ENCODE measurements at regions of chr15 and their contacts with region 1.

Region 1: DNA sequence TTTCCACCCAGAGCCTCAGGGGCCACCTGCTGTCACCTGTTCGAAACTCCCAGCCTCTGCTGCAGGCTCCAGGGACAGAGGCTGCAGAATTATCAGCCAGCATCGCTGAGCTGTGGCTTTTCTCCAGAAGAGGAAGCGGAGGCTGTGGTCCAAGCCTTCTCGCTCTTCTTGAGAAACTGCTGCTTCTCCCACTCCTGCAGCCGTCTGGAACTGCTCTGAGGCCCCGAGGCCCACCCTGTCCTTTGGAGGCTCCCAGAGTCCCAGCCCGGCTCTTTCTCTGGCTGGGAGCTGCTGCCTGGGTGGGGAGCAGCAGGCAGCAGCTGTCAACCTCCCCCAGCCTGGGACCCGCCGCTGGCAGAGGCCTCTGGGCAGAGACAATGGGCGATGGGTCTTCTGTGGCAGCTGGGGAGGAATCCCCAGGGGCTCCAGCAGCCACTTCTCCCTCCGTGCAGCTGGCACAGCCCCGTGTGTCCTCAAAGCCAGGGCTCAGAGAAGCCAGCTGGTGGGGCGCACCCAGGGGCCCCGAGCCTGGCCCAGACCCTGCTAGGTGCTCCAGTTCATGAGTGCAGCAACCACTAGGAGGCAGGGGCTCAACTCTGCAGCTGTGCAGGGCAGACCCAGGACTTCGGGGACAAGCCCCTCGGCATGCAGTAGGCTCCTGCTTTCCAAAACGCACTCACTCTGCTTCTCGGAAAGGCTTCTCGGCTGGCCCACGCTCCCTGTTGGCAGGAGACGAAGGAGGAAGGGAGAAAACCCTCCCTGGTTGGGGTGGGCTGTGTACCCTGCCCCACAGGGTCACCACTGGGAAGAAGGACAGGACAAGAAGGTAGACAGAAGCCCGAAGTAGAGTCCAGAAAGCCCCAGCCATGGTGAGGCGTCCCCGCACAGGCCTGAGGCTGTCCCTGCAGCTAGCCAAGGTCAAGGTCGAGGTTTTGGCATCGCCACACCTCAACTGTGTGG is 49.9 kb upstream of the FURIN start:
- DNase-seq: peak; percentile 45
- ATAC-seq: peak; percentile 50
- H3K4me3 Mint-ChIP-seq: peak overlapping the region; percentile 56
- H3K27ac Mint-ChIP-seq: peak overlapping the region; percentile 87
- H3K4me1 Mint-ChIP-seq: peaks cover 77% of the 10 kb centered on the region
- H3K27me3 Mint-ChIP-seq: no peaks in the 10 kb centered on the region

Region 2: GRCh38 chr15:90829942-90830440 is 11.5 kb after region 1 on chr15:
- CTCF ChIA-PET with region 1: interaction called, 26 read pairs
- POLR2A ChIA-PET with region 1: interaction called, 23 read pairs
- DNase-seq: peak; percentile 67
- ATAC-seq: peak; percentile 86
- H3K4me3 Mint-ChIP-seq: peak overlapping the region; percentile 62
- H3K27ac Mint-ChIP-seq: peak overlapping the region; percentile 95
- H3K4me1 Mint-ChIP-seq: peaks cover 72% of the 10 kb centered on the region
- H3K27me3 Mint-ChIP-seq: no peaks in the 10 kb centered on the region

Region 3: GRCh38 chr15:90839187-90840071 is 20.9 kb after region 1 on chr15:
- CTCF ChIA-PET with region 1: interaction called, 14 read pairs
- POLR2A ChIA-PET with region 1: interaction called, 7 read pairs
- DNase-seq: no peak
- ATAC-seq: no peak
- H3K4me3 Mint-ChIP-seq: peak overlapping the region; percentile 56
- H3K27ac Mint-ChIP-seq: peak overlapping the region; percentile 74
- H3K4me1 Mint-ChIP-seq: peaks cover 61% of the 10 kb centered on the region
- H3K27me3 Mint-ChIP-seq: no peaks in the 10 kb centered on the region

Region 4: GRCh38 chr15:90860942-90861675 is 42.6 kb after region 1 on chr15:
- CTCF ChIA-PET with region 1: interaction called, 11 read pairs
- POLR2A ChIA-PET with region 1: interaction called, 3 read pairs
- DNase-seq: no peak
- ATAC-seq: no peak
- H3K4me3 Mint-ChIP-seq: no peak overlapping the region
- H3K27ac Mint-ChIP-seq: no peak overlapping the region
- H3K4me1 Mint-ChIP-seq: peaks cover 42% of the 10 kb centered on the region
- H3K27me3 Mint-ChIP-seq: no peaks in the 10 kb centered on the region

Region 5: GRCh38 chr15:90869601-90870353 is 51.2 kb after region 1 on chr15:
- CTCF ChIA-PET with region 1: interaction called, 7 read pairs
- POLR2A ChIA-PET with region 1: interaction called, 17 read pairs
- DNase-seq: peak; percentile 54
- ATAC-seq: peak; percentile 37
- H3K4me3 Mint-ChIP-seq: peak overlapping the region; percentile 89
- H3K27ac Mint-ChIP-seq: peak overlapping the region; percentile 94
- H3K4me1 Mint-ChIP-seq: peaks cover 56% of the 10 kb centered on the region
- H3K27me3 Mint-ChIP-seq: no peaks in the 10 kb centered on the region

Region 6: GRCh38 chr15:91049378-91050127 is 231.0 kb after region 1 on chr15:
- CTCF ChIA-PET with region 1: no interaction called
- POLR2A ChIA-PET with region 1: no interaction called
- DNase-seq: peak; percentile 79
- ATAC-seq: peak; percentile 90
- H3K4me3 Mint-ChIP-seq: no peak overlapping the region
- H3K27ac Mint-ChIP-seq: no peak overlapping the region
- H3K4me1 Mint-ChIP-seq: peaks cover 27% of the 10 kb centered on the region
- H3K27me3 Mint-ChIP-seq: peaks cover 35% of the 10 kb centered on the region